ENCODE measurements at regions of chrX and their contacts with region 1.

Region 1: DNA sequence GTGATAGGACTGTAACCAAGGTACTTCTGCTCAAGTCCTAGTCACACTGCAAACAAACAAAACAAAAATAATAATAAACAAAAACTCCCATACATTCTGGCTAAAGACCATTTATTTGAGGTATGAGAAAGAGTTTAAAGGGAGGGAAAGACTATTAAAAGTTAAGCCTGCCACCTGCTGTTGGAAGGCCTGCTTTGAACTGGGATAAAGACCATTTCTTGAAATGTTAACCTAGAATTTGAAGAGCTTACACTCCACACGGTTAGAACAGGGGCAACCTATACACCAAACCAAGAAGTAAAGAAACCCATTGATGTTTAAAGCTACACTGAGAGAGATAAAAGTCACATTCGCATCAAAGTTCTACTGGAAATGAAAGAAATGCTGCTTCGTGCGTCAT is 548.7 kb upstream of the DIPK2B start:
- DNase-seq: no peak
- ATAC-seq: peak in 3 of 8 donors; percentile 38 to 60 (median 58)
- H3K4me3 ChIP-seq: peak overlapping the region in 7 of 10 donors; percentile 14 to 46 (median 33)
- H3K27ac ChIP-seq: peak overlapping the region in 6 of 10 donors; percentile 11 to 72 (median 63)
- H3K4me1 ChIP-seq: peaks cover 0 to 32% (median 8%) of the 10 kb centered on the region in 9 donors
- H3K27me3 ChIP-seq: peaks cover 0 to 45% (median 0%) of the 10 kb centered on the region in 7 donors
- CTCF ChIP-seq: peak in 6 of 9 donors; percentile 23 to 47 (median 42)

Region 2: GRCh38 chrX:44946771-44947170 is 802.6 kb before region 1 on chrX:
- intact Hi-C with region 1: no loop called
- DNase-seq: no peak
- ATAC-seq: no peak
- H3K4me3 ChIP-seq: no peak overlapping the region
- H3K27ac ChIP-seq: no peak overlapping the region
- H3K4me1 ChIP-seq: peaks cover 0 to 39% (median 13%) of the 10 kb centered on the region in 9 donors
- H3K27me3 ChIP-seq: no peaks in the 10 kb centered on the region
- CTCF ChIP-seq: no peak

Region 3: DNA sequence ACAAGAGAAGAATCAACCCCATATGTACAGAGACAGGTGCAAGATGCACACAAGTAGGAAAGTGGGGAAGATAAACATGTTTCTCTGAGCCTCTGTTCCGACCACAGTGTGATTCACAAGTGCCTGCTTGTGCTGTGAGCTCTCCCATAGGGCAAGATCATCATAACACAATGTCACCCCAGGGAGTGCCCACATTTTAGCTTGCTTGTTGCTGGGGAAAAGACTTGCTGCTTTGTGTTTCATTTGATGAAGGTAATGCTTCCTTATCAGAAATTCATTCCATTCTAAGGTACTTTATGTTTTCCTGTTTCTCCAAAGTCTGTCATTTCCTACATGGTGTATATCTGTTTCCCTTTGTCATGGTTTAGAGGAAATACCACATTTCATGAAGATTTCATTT is 244.2 kb before region 1 on chrX:
- intact Hi-C with region 1: loop called in 3 of 10 experiments (anchors 5 to 10 kb)
- DNase-seq: no peak
- ATAC-seq: no peak
- H3K4me3 ChIP-seq: no peak overlapping the region
- H3K27ac ChIP-seq: peak overlapping the region in 3 of 10 donors; percentile 67 to 76 (median 74)
- H3K4me1 ChIP-seq: peaks cover 0 to 29% (median 20%) of the 10 kb centered on the region in 9 donors
- H3K27me3 ChIP-seq: peaks cover 0 to 6% (median 0%) of the 10 kb centered on the region in 7 donors
- CTCF ChIP-seq: no peak

Region 4: DNA sequence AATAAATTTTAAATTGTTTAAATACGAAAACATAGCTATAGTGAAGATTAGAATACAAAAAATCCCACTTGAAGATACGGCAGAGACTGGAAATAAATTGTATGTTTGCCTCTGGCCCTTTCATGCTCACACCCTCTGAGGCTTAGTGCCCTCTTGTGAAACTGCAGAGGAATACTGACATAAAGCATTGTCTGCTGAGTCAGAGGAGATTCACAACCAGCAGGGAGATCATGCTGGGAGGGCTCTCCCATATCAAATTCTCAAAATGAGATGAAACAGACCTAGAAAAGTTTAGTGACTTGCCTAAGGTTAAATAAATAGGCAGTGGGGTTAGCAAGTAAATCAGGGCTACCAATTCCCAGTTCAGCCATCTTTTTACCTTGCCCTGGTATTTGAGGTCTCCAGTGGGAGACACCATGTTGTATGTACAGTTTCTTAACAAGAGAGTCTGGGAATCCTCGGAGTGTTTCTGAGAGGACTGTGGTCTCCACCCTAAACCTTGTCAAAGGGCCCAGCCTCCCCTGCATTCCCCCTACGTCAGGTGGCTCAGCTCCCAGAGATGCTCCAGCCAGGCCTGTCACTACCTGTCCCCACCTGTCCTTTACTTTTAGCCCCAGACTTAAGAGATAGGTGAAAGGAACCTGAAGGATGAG is 32.7 kb after region 1 on chrX:
- intact Hi-C with region 1: no loop called
- DNase-seq: no peak
- ATAC-seq: peak in 3 of 8 donors; percentile 55 to 64 (median 63)
- H3K4me3 ChIP-seq: no peak overlapping the region
- H3K27ac ChIP-seq: no peak overlapping the region
- H3K4me1 ChIP-seq: peaks cover 0 to 22% (median 0%) of the 10 kb centered on the region in 9 donors
- H3K27me3 ChIP-seq: peaks cover 0 to 56% (median 0%) of the 10 kb centered on the region in 7 donors
- CTCF ChIP-seq: peak in 5 of 9 donors; percentile 24 to 45 (median 40)